Gastrocnemius medialis (tissue), 4 donors: ENCODE measurements at regions of chr5 and their contacts with region 1.

Region 1: DNA sequence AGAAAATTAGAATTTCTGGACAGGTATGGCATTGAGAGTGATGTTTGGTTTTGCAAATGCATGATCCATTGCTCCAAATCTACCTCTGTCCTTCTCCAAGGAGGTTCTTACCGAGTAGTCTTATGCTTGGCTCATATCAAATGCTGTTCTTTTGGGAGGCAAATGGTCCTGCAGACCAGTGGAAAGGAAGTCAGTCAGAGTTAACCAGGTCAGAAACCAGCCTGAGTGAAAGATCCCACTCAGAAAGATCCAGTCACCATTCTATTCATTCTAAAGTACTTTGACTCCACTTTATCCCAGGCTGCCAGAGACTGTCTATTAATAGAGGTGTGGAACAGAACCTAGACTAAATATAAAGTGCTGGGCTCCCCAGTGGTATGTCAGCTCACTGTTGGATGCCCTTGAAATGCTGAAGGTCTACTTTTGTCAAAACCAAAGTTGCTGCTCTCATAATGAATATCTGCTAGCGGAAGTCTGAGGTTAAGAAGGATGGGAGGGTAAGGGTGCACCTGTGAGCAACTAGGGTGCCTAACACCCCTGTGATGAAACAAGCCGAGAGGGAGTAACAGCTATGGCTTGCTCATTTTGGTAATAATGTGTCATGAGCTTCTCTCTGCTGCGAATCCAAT is 302.2 kb downstream of the ZNF608 start:
- DNase-seq: peak; percentile 6 to 23
- ATAC-seq: peak; percentile 98 to 100
- H3K4me3 ChIP-seq: no peak overlapping the region
- H3K27ac ChIP-seq: peak overlapping the region; percentile 54 to 76 (median 63)
- H3K4me1 ChIP-seq: peaks cover 35 to 48% of the 10 kb centered on the region in 2 donors
- H3K27me3 ChIP-seq: no peaks in the 10 kb centered on the region
- CTCF ChIP-seq: no peak
- POLR2A ChIP-seq: no peak

Region 2: GRCh38 chr5:124274949-124275348 is 169.3 kb before region 1 on chr5:
- in situ Hi-C with region 1: no loop called
- intact Hi-C with region 1: no loop called
- DNase-seq: no peak
- ATAC-seq: no peak
- H3K4me3 ChIP-seq: no peak overlapping the region
- H3K27ac ChIP-seq: no peak overlapping the region
- H3K4me1 ChIP-seq: no peaks in the 10 kb centered on the region
- H3K27me3 ChIP-seq: no peaks in the 10 kb centered on the region
- CTCF ChIP-seq: no peak
- POLR2A ChIP-seq: no peak

Region 3: GRCh38 chr5:124352312-124352711 is 91.9 kb before region 1 on chr5:
- in situ Hi-C with region 1: no loop called
- intact Hi-C with region 1: loop called (anchors 5 kb)
- DNase-seq: no peak
- ATAC-seq: no peak
- H3K4me3 ChIP-seq: no peak overlapping the region
- H3K27ac ChIP-seq: no peak overlapping the region
- H3K4me1 ChIP-seq: no peaks in the 10 kb centered on the region
- H3K27me3 ChIP-seq: no peaks in the 10 kb centered on the region
- CTCF ChIP-seq: no peak
- POLR2A ChIP-seq: no peak

Region 4: GRCh38 chr5:124512236-124512635 is 68.0 kb after region 1 on chr5:
- in situ Hi-C with region 1: no loop called
- intact Hi-C with region 1: no loop called
- DNase-seq: peak in 1 of 2 donors; percentile 23
- ATAC-seq: no peak
- H3K4me3 ChIP-seq: no peak overlapping the region
- H3K27ac ChIP-seq: no peak overlapping the region
- H3K4me1 ChIP-seq: peaks cover 0 to 5% of the 10 kb centered on the region in 2 donors
- H3K27me3 ChIP-seq: no peaks in the 10 kb centered on the region
- CTCF ChIP-seq: no peak
- POLR2A ChIP-seq: no peak

Region 5: GRCh38 chr5:124642151-124642550 is 197.9 kb after region 1 on chr5:
- in situ Hi-C with region 1: no loop called
- intact Hi-C with region 1: no loop called
- DNase-seq: no peak
- ATAC-seq: no peak
- H3K4me3 ChIP-seq: no peak overlapping the region
- H3K27ac ChIP-seq: no peak overlapping the region
- H3K4me1 ChIP-seq: no peaks in the 10 kb centered on the region
- H3K27me3 ChIP-seq: no peaks in the 10 kb centered on the region
- CTCF ChIP-seq: no peak
- POLR2A ChIP-seq: no peak

Region 6: DNA sequence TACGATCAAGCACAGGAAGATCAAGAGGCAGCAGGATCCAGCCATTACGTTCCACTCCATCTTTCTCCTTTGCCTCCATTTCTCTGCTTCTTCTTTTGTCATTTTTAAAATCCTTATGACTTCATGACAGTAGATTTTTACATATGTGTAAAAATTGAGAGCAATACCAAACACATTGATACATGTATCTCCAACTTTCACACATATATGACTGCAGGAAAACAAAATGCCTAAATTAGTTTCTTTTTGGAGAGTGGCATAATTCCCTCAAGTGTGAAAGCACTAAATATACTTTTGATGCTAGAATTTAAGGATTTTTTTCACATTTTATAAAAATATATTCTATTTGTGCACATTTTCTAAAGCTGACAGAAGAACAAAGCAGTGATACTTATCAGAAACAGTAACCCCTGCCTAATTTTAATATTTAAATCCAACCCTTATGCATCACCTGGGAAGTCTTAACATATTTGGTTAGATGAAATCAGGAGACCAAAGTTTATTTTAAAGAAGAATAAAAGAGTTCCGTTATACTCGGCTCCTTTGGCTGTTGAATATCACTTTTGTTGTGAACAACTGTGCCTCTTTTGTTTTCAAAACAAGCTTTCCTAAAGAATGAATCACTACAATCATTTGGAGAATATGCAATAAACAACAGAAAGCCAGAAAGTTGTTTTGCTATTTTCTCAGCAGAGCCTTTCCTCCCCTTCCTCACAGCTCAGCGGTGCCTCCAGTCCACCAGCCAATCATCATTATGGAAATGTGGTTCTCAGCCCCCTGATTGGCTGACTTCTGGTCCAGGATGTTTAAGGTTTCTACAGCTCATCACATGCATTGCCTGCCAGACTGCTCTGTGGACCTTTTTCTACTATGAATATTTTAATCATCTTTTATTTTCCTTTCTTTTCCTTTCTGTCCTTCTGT is 311.0 kb after region 1 on chr5:
- in situ Hi-C with region 1: no loop called
- intact Hi-C with region 1: loop called (anchors 10 kb)
- DNase-seq: no peak
- ATAC-seq: peak; percentile 58 to 81
- H3K4me3 ChIP-seq: no peak overlapping the region
- H3K27ac ChIP-seq: peak overlapping the region in 1 of 4 donors; percentile 22
- H3K4me1 ChIP-seq: peaks cover 0 to 13% of the 10 kb centered on the region in 2 donors
- H3K27me3 ChIP-seq: no peaks in the 10 kb centered on the region
- CTCF ChIP-seq: no peak
- POLR2A ChIP-seq: no peak

Region 7: DNA sequence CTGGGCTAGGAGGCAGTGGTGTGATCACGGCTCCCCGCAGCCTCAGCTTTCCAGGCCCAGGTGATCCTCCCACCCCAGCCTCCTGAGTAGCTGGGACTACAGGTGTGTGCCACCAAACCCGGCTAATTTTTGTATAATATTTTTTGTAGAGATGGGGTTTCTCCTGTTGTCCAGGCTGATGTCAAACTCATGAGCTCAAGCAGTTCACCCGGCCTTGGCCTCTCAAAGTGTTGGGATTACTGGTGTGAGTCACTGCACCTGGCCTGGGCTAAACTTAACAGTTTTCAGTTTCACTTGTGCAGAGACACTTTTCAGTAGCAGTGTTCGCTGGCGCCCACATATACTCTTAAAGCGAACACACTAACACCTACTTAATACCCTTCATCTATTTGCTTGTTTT is 507.8 kb after region 1 on chr5:
- in situ Hi-C with region 1: no loop called
- intact Hi-C with region 1: loop called (anchors 10 kb)
- DNase-seq: peak in 1 of 2 donors; percentile 16
- ATAC-seq: peak in 1 of 2 donors; percentile 51
- H3K4me3 ChIP-seq: no peak overlapping the region
- H3K27ac ChIP-seq: peak overlapping the region in 1 of 4 donors; percentile 19
- H3K4me1 ChIP-seq: peaks cover 8 to 14% of the 10 kb centered on the region in 2 donors
- H3K27me3 ChIP-seq: no peaks in the 10 kb centered on the region
- CTCF ChIP-seq: no peak
- POLR2A ChIP-seq: no peak